Heart right ventricle (tissue), 16 donors: ENCODE measurements at regions of chr6 and their contacts with region 1.

Region 1: DNA sequence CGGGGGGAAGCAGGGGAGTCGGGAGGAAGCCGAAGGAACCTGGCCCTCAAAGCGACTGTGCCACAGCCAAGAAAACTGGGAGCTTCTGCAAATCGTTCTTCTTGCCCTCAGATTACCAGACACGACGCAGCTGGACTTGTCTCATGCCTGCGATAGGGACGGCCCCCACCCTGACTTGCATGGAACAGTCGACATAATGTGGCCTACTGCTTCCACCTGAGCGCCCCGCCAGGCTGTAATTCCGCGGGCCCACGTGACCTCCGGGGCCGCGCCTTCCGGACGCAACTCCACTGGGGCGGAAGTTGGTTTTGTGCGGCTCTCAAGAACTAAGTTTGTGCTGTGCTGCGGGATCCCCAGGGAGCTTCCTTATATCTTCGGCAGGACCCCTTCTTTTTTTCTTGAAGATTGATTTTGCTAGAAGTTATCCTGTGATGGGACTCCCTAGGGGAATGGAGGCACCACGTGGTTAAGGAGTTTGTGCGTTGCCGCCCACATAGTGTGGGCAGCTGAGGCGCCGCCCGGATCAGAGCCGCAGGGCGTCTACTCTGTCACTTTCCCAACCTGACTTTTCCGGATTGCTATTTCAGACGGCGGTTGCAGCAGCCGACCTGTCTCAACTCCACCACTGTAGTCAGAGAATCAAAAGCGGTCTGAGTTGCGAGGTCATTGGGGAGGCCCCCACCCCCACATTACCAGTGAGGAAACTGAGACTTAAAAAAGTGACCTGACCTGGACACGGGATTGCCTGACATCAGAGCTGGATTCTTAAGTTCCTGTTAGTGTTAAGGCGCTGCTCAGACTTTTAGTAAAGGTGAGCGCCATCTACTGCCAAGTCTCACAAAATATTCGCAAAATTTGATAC is 540 bp upstream of the CD164 start:
- DNase-seq: peak; percentile 92 to 93
- ATAC-seq: peak; percentile 92 to 98 (median 96)
- H3K4me3 ChIP-seq: peak overlapping the region; percentile 75 to 96 (median 86)
- H3K27ac ChIP-seq: peak overlapping the region; percentile 96 to 100 (median 99)
- H3K4me1 ChIP-seq: peaks cover 0 to 51% (median 41%) of the 10 kb centered on the region in 9 donors
- H3K27me3 ChIP-seq: no peaks in the 10 kb centered on the region
- CTCF ChIP-seq: peak; percentile 15 to 82 (median 61)

Region 2: DNA sequence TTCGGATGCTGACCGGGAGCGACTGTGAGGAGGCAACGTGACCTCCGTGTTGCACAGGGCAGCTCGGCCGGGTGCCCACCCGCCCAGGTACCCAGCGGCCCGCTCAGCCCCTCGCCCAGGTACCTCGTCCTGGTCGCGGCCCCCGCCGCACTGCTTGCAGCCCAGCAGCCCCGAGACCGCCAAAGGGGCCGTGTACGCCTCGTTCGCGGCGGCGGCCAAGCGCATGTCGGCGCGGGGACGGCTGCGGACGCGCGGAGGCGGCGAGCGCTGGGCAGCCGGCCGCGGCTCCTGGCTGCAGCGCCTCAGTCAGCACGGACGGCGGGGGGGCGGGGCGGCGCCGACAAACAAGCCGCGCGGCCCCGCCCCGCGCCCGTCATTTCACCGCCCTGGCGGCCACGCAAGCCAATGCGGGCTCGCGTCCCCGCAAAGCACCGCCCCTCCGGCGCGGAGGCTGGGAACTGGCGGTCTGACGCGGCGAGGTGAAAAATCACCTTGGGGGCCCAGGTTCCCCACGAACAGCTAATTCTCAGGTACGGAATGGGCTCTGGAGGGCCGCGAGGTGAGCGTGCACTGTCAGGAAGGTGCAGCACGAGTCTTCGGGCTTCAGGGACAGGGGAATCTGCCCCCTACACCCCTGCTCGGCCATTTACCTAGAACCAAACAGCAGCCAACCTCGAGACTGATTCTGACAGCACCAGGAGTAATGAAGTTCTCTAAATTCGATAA is 373.4 kb before region 1 on chr6:
- intact Hi-C with region 1: loop called in 2 of 10 experiments (anchors 5 to 10 kb)
- DNase-seq: peak; percentile 93 to 96
- ATAC-seq: peak; percentile 93 to 98 (median 96)
- H3K4me3 ChIP-seq: peak overlapping the region; percentile 67 to 98 (median 94)
- H3K27ac ChIP-seq: peak overlapping the region; percentile 91 to 98 (median 96)
- H3K4me1 ChIP-seq: peaks cover 0 to 74% (median 59%) of the 10 kb centered on the region in 9 donors
- H3K27me3 ChIP-seq: no peaks in the 10 kb centered on the region
- CTCF ChIP-seq: peak in 7 of 9 donors; percentile 11 to 52 (median 15)

Region 3: DNA sequence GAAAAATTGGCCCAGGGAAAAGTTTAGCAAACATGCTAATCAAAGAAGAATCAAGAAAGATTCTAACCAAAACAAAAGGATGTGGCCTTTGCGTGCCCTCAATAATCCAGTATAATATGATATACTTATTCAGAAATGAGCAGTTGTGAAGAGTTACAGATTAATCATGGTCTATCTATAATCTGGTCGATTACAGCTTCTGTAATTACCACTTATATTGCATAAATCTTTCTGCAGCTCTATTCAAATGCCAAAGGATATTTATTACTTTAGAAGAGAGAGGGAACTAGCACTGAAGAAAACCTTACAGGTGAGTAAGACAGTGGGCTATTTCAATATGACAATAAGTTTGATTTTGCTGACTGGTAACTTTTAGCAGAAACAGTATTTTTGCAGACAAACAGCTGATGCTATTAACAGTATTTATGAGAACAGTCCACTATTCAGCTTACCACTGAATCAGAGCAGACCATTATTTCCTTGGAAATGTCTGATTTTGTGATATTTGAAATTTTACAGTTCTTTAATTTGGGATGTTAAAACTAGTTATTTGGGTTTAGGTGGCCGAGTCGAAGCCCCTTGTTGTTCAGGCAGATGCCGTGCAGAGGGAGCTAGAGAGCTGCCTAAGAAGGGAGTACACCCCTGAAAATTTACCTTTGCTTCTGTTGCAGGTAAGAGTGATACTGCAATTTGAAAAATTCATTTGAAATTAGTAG is 195.2 kb before region 1 on chr6:
- intact Hi-C with region 1: loop called (anchors 1 to 5 kb)
- DNase-seq: peak; percentile 19 to 30
- ATAC-seq: peak in 6 of 8 donors; percentile 55 to 82 (median 70)
- H3K4me3 ChIP-seq: peak overlapping the region in 1 of 10 donors; percentile 22
- H3K27ac ChIP-seq: no peak overlapping the region
- H3K4me1 ChIP-seq: peaks cover 0 to 6% (median 0%) of the 10 kb centered on the region in 9 donors
- H3K27me3 ChIP-seq: peaks cover 0 to 6% (median 0%) of the 10 kb centered on the region in 7 donors
- CTCF ChIP-seq: peak; percentile 77 to 97 (median 95)

Region 4: DNA sequence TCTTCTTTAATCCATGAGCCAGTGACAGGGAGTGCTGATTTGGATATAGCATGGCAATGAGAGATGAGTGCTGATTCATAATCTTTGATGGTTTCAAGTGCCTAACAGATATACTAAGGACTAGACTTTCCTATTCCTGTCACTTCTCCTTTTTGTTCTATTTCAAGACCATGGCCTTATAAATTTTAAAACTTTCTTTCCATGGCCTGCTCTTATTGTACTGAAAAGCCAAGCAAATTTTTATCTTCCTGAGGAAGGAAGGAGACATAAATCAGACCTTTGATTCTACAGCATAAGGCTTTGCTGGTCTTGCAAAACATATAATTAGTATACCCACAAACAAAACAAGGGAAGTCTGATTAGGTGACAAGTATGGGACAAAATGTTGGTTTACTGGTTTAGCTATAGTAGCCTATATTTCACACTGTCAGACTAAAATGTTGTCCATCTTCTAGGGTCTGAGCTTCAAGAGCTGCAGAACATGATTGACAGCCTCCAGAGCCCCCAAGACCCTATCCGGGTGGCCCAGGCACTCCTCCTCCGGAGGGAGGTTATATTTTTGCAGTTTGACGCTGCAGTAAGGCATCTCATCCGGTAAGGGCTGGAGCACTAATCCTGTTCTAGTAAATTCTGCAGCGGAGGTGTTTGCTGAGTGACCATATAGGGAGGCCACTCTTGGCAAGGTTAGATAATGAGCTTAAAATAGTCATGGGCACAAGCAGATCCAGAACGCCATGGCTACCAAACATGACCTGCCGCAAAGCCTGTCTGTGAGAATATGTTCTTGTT is 82.8 kb before region 1 on chr6:
- intact Hi-C with region 1: loop called in 3 of 10 experiments (anchors 5 kb)
- DNase-seq: peak in 1 of 2 donors; percentile 62
- ATAC-seq: peak; percentile 88 to 98 (median 95)
- H3K4me3 ChIP-seq: no peak overlapping the region
- H3K27ac ChIP-seq: peak overlapping the region; percentile 64 to 87 (median 80)
- H3K4me1 ChIP-seq: peaks cover 0 to 53% (median 33%) of the 10 kb centered on the region in 9 donors
- H3K27me3 ChIP-seq: no peaks in the 10 kb centered on the region
- CTCF ChIP-seq: no peak

Region 5: GRCh38 chr6:109434456-109434855 is 51.6 kb after region 1 on chr6:
- intact Hi-C with region 1: loop called in 2 of 10 experiments (anchors 5 to 10 kb)
- DNase-seq: no peak
- ATAC-seq: no peak
- H3K4me3 ChIP-seq: no peak overlapping the region
- H3K27ac ChIP-seq: no peak overlapping the region
- H3K4me1 ChIP-seq: peaks cover 0 to 13% (median 8%) of the 10 kb centered on the region in 9 donors
- H3K27me3 ChIP-seq: no peaks in the 10 kb centered on the region
- CTCF ChIP-seq: no peak

Region 6: GRCh38 chr6:109482905-109483735 is 100.3 kb after region 1 on chr6 and contains the start of gene ZBTB24:
- intact Hi-C with region 1: loop called in 3 of 10 experiments (anchors 1 to 10 kb)
- DNase-seq: peak; percentile 87 to 93
- ATAC-seq: peak; percentile 97 to 98 (median 98)
- H3K4me3 ChIP-seq: peak within 1 kb of the TSS; percentile 75 to 100 (median 92)
- H3K27ac ChIP-seq: peak within 1 kb of the TSS in 9 of 10 donors; percentile 66 to 94 (median 83)
- H3K4me1 ChIP-seq: peaks cover 4 to 50% (median 45%) of the 10 kb centered on the region in 9 donors
- H3K27me3 ChIP-seq: no peaks in the 10 kb centered on the region
- CTCF ChIP-seq: no peak
- total RNA-seq, gene ZBTB24: 2.4 to 4.0 (median 3.3) TPM